Psoas muscle (tissue), 8 donors: ENCODE measurements at regions of chr4 and their contacts with region 1.

Region 1: DNA sequence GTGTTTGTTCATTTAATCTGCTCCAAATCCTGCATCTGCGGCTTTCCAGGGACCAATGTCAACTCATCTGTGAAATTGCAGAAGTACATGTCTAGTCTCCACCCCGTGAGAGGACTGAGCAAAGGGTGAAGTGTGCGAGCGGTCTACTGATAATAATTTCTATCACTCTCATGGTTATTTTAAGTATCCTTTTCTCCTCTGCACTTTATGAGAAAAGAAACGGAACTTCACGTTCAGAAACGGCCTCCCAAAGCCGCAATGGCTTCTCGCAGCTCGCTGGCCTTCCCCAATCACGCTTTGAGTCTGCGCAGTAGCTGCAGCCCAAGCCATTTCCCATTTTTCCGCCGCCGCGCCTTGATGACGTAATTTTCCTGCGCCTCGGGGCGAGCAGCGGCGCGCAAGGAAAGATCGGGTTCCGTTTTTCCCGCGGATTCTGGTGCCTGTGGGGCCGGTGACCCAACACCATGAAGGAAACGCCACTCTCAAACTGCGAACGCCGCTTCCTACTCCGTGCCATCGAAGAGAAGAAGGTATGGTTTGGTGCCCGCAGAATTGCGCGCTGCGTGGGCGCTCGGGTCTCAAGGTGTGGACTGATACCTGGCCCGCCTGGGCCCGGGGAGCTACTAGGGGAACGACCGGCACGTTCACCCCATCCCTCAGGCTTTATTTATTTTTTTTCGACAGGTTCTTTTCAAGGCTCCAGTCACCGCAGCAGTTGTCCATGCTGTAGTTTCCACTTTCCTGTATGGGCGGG is at the start of gene EXOSC9:
- DNase-seq: peak; percentile 95 to 97
- ATAC-seq: peak; percentile 95 to 99 (median 98)
- H3K4me3 ChIP-seq: peak within 1 kb of the TSS; percentile 85
- H3K27ac ChIP-seq: peak within 1 kb of the TSS; percentile 92
- H3K4me1 ChIP-seq: peaks cover 17% of the 10 kb centered on the region
- H3K27me3 ChIP-seq: no peaks in the 10 kb centered on the region
- CTCF ChIP-seq: no peak
- total RNA-seq, gene EXOSC9: 12.3 to 14.5 (median 13.4) TPM

Region 2: GRCh38 chr4:121675715-121676114 is 125.4 kb before region 1 on chr4:
- intact Hi-C with region 1: loop called in 1 of 2 experiments (anchors 10 kb)
- DNase-seq: no peak
- ATAC-seq: no peak
- H3K4me3 ChIP-seq: no peak overlapping the region
- H3K27ac ChIP-seq: no peak overlapping the region
- H3K4me1 ChIP-seq: no peaks in the 10 kb centered on the region
- H3K27me3 ChIP-seq: no peaks in the 10 kb centered on the region
- CTCF ChIP-seq: no peak

Region 3: GRCh38 chr4:121696581-121697461 is 104.3 kb before region 1 on chr4 and contains the start of gene ANXA5:
- intact Hi-C with region 1: loop called in 1 of 2 experiments (anchors 5 kb)
- DNase-seq: peak; percentile 92 to 96
- ATAC-seq: peak; percentile 95 to 98 (median 97)
- H3K4me3 ChIP-seq: peak within 1 kb of the TSS; percentile 96
- H3K27ac ChIP-seq: peak within 1 kb of the TSS; percentile 97
- H3K4me1 ChIP-seq: peaks cover 35% of the 10 kb centered on the region
- H3K27me3 ChIP-seq: no peaks in the 10 kb centered on the region
- CTCF ChIP-seq: peak; percentile 39
- total RNA-seq, gene ANXA5: 59.1 to 149 (median 84.5) TPM

Region 4: DNA sequence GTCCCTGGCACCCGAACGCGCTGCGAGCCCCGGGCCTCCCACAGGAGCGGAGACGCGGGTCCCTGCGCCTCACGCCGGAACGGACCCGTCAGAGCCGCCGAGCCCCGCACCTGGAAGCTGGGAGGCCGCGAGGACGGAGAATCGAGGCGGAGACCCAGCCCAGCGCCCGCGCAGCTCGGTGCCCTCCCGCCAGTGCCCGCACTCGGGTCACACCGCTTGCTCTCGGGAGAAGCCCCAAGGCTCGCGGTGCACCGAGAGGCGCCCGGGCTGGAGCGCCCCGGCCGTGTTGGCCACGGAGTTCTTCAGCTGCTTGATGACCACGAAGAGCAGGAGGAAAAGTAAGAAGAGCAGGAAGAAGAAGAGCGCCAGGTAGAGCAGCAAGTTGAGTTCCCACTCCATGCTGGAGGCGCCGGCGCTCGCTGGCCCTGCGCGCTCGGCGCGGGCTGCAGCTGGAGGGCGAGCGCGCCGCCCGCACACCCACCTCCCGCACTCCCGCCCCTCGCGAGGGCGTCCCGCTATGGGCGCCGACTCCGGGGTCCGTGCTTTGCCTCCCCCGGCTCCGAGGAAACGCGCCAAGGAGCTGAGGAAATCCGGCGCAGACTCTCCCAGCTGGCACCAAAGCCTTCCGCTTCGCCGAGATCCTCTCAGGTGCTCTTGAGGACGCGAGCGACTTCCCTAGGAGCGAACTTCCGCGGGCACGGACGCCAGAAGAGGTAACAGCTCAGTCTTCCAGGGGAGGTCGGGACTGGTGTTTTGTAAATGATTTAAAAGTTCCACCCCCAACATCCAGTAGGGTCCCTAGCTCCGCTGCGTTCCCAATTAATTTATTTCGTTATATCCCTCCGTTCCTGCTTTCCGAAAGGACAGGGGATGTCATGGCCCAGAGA is 36.2 kb before region 1 on chr4 and contains the start of gene SMIM43:
- intact Hi-C with region 1: no loop called
- DNase-seq: no peak
- ATAC-seq: no peak
- H3K4me3 ChIP-seq: peak within 1 kb of the TSS; percentile 63
- H3K27ac ChIP-seq: no peak within 1 kb of the TSS
- H3K4me1 ChIP-seq: peaks cover 8% of the 10 kb centered on the region
- H3K27me3 ChIP-seq: peaks cover 0 to 43% (median 18%) of the 10 kb centered on the region in 3 donors
- CTCF ChIP-seq: no peak
- total RNA-seq, gene SMIM43: not detected

Region 5: GRCh38 chr4:121823505-121824170 is 22.5 kb after region 1 on chr4 and contains the start of gene CCNA2:
- intact Hi-C with region 1: loop called in 1 of 2 experiments (anchors 2 kb)
- DNase-seq: peak; percentile 96 to 97
- ATAC-seq: peak; percentile 100
- H3K4me3 ChIP-seq: peak within 1 kb of the TSS; percentile 72
- H3K27ac ChIP-seq: peak within 1 kb of the TSS; percentile 78
- H3K4me1 ChIP-seq: peaks cover 8% of the 10 kb centered on the region
- H3K27me3 ChIP-seq: no peaks in the 10 kb centered on the region
- CTCF ChIP-seq: no peak
- total RNA-seq, gene CCNA2: 0.18 to 0.46 (median 0.34) TPM